GM12878 (cell line): ENCODE measurements at regions of chr18 and their contacts with region 1.

Region 1: DNA sequence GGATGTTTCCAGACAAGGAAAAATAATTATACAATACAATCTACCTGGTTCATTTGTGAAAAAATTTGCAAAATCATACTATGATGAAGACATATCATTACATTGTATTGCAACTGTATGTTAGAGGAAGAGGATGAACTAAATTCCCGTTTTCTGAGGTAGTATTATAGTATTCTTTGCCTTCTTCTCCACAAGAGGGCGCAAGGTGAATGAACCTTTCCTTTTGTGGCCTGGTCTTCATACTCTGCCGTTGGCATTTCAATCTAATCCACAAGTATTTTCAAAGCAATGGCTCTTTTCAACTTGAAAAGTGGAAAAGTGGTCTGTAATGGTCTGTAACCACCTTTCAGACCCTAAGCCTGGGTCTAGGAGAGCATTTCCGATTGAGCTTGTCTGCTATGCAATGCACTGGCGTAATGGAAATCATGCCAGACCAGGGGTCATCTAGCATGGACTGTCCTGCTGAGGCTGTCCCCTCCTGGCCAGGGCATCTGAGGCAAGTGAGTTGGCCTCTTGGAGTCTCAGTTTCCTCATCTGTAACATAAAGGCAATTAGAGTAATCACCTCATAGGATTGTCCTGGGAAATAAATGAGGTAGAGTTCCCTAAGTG is 30.8 kb upstream of the ZNF396 start:
- DNase-seq: no peak
- ATAC-seq: peak; percentile 78
- H3K4me3 ChIP-seq: no peak overlapping the region
- H3K27ac ChIP-seq: no peak overlapping the region
- H3K4me1 ChIP-seq: peaks cover 21% of the 10 kb centered on the region
- H3K27me3 ChIP-seq: no peaks in the 10 kb centered on the region
- CTCF ChIP-seq: peak; percentile 67 to 85 (median 76)
- EP300 ChIP-seq: no peak
- POLR2A ChIP-seq: no peak
- RAD21 ChIP-seq: peak; percentile 93

Region 2: DNA sequence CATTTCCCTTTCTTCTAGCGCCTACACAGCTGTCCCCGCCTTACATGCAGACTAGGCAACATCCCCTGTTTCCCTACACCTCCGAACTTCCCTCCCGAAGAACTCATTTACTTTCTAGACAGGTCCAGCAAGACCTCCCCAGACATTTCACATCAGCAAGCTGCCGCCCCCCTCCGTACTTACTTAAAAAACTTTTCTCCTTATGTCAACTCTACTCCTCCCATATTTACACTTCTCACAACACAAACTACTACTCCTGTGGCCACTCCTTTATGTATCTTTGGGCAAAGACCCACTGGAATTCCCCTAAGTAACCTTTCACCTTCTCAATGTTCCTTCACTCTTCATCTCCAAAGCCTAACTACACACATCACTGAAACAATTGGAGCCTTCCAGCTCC is 187.5 kb before region 1 on chr18:
- CTCF ChIA-PET with region 1: no interaction called
- POLR2A ChIA-PET with region 1: no interaction called
- RAD21 ChIA-PET with region 1: no interaction called
- SMC1A ChIA-PET with region 1: no interaction called
- in situ Hi-C with region 1: no loop called
- intact Hi-C with region 1: no loop called
- DNase-seq: no peak
- ATAC-seq: no peak
- H3K4me3 ChIP-seq: no peak overlapping the region
- H3K27ac ChIP-seq: no peak overlapping the region
- H3K4me1 ChIP-seq: no peaks in the 10 kb centered on the region
- H3K27me3 ChIP-seq: no peaks in the 10 kb centered on the region
- CTCF ChIP-seq: no peak
- EP300 ChIP-seq: no peak
- POLR2A ChIP-seq: no peak
- RAD21 ChIP-seq: no peak

Region 3: DNA sequence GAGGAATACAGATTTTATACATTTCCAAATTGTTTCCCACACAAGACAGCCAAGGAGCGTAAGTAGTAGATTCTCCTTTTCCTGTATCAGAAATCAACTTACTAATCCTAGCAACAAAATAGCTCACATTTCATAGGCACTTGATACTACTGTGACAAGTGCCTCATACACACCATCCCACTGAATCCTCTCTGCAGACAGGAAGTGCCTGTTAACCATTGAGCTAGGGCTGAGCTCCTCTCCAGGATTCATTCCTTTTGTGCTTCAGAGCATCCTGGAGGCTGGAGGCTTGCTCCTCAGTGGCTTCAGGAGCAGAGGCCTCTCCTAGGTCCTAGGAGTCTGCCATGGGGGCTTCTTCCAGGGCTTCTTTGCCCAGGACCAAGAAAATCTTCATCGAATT is 10.0 kb before region 1 on chr18:
- CTCF ChIA-PET with region 1: interaction called, 7 read pairs
- POLR2A ChIA-PET with region 1: no interaction called
- RAD21 ChIA-PET with region 1: interaction called, 6 read pairs
- SMC1A ChIA-PET with region 1: interaction called, 12 read pairs
- in situ Hi-C with region 1: no loop called
- intact Hi-C with region 1: no loop called
- DNase-seq: no peak
- ATAC-seq: no peak
- H3K4me3 ChIP-seq: no peak overlapping the region
- H3K27ac ChIP-seq: no peak overlapping the region
- H3K4me1 ChIP-seq: no peaks in the 10 kb centered on the region
- H3K27me3 ChIP-seq: no peaks in the 10 kb centered on the region
- CTCF ChIP-seq: no peak
- EP300 ChIP-seq: no peak
- POLR2A ChIP-seq: no peak
- RAD21 ChIP-seq: no peak

Region 4: GRCh38 chr18:35478520-35479435 is 70.8 kb after region 1 on chr18:
- CTCF ChIA-PET with region 1: interaction called, 11 read pairs
- POLR2A ChIA-PET with region 1: interaction called, 8 read pairs
- RAD21 ChIA-PET with region 1: interaction called, 10 read pairs
- SMC1A ChIA-PET with region 1: interaction called, 29 read pairs
- in situ Hi-C with region 1: no loop called
- intact Hi-C with region 1: no loop called
- DNase-seq: no peak
- ATAC-seq: peak; percentile 88
- H3K4me3 ChIP-seq: no peak overlapping the region
- H3K27ac ChIP-seq: no peak overlapping the region
- H3K4me1 ChIP-seq: no peaks in the 10 kb centered on the region
- H3K27me3 ChIP-seq: no peaks in the 10 kb centered on the region
- CTCF ChIP-seq: no peak
- EP300 ChIP-seq: no peak
- POLR2A ChIP-seq: no peak
- RAD21 ChIP-seq: no peak

Region 5: DNA sequence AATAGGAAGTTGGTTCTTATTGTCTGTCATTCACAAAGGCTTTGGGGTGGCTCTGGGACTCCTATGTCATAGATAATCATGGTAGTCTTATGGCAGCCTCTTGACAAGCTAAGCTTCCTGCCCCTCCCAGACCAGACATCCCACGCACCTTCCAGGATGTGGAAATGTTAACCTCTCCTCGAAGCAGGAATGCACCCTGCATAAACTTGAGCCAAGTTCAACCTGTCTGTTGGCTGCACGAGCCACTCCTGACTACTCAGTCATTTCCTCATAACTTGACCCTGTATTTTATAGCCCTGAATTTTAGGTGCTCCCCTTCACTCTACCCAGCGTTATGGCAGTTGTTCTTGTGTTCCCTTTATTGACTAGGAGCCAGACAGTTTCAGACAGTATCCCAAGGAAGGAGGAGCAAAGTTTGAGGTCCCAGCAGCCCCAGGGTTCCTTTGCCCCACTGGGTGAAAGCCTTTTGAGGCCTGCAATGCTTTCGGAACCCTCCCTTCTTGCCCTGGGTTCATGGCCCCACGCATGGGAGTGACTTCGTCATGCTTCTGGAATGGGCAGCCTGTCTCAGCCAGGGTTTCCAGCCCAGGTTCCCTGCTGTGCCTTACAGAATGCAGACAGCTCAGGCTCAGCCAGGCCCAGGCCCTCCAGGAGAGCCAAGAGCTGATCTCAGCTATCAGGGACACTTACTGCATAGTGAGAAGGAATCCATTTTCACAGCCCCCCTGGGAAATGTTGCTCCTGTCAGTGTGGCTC is 105.4 kb after region 1 on chr18:
- CTCF ChIA-PET with region 1: interaction called, 27 read pairs
- POLR2A ChIA-PET with region 1: no interaction called
- RAD21 ChIA-PET with region 1: interaction called, 24 read pairs
- SMC1A ChIA-PET with region 1: interaction called, 28 read pairs
- in situ Hi-C with region 1: no loop called
- intact Hi-C with region 1: loop called (anchors 1 kb)
- DNase-seq: no peak
- ATAC-seq: no peak
- H3K4me3 ChIP-seq: no peak overlapping the region
- H3K27ac ChIP-seq: no peak overlapping the region
- H3K4me1 ChIP-seq: peaks cover 8% of the 10 kb centered on the region
- H3K27me3 ChIP-seq: no peaks in the 10 kb centered on the region
- CTCF ChIP-seq: no peak
- EP300 ChIP-seq: no peak
- POLR2A ChIP-seq: no peak
- RAD21 ChIP-seq: no peak

Region 6: DNA sequence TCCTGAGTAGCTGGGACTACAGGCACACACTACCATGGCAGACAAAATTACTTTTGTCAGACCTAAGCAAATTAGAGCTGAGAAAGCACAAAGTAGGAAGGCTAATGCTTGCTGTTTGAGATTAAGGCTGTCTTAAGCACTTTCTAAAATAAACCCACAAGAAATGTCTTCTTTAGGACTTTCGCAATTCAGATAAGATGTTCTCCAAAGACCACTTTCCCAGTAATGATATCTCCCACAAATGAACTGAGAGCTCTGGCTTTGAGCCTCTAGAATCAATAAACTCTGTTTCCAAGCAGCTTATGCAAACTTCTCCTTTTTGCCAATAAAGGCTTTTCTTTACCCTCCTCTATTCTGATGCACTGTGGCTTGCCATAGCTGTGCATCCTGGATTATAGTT is 141.6 kb after region 1 on chr18:
- CTCF ChIA-PET with region 1: no interaction called
- POLR2A ChIA-PET with region 1: no interaction called
- RAD21 ChIA-PET with region 1: no interaction called
- SMC1A ChIA-PET with region 1: no interaction called
- in situ Hi-C with region 1: no loop called
- intact Hi-C with region 1: no loop called
- DNase-seq: no peak
- ATAC-seq: no peak
- H3K4me3 ChIP-seq: no peak overlapping the region
- H3K27ac ChIP-seq: no peak overlapping the region
- H3K4me1 ChIP-seq: no peaks in the 10 kb centered on the region
- H3K27me3 ChIP-seq: no peaks in the 10 kb centered on the region
- CTCF ChIP-seq: no peak
- EP300 ChIP-seq: no peak
- POLR2A ChIP-seq: no peak
- RAD21 ChIP-seq: no peak

Region 7: GRCh38 chr18:35688757-35689156 is 280.8 kb after region 1 on chr18:
- CTCF ChIA-PET with region 1: interaction called, 3 read pairs
- POLR2A ChIA-PET with region 1: no interaction called
- RAD21 ChIA-PET with region 1: interaction called, 3 read pairs
- SMC1A ChIA-PET with region 1: no interaction called
- in situ Hi-C with region 1: no loop called
- intact Hi-C with region 1: loop called (anchors 10 kb)
- DNase-seq: peak; percentile 35
- ATAC-seq: peak; percentile 94
- H3K4me3 ChIP-seq: no peak overlapping the region
- H3K27ac ChIP-seq: peak overlapping the region; percentile 7
- H3K4me1 ChIP-seq: peaks cover 4% of the 10 kb centered on the region
- H3K27me3 ChIP-seq: no peaks in the 10 kb centered on the region
- CTCF ChIP-seq: no peak
- EP300 ChIP-seq: no peak
- POLR2A ChIP-seq: no peak
- RAD21 ChIP-seq: no peak

Region 8: GRCh38 chr18:35756506-35757117 is 348.6 kb after region 1 on chr18:
- CTCF ChIA-PET with region 1: interaction called, 27 read pairs
- POLR2A ChIA-PET with region 1: no interaction called
- RAD21 ChIA-PET with region 1: interaction called, 6 read pairs
- SMC1A ChIA-PET with region 1: interaction called, 14 read pairs
- in situ Hi-C with region 1: no loop called
- intact Hi-C with region 1: loop called (anchors 2 kb)
- DNase-seq: no peak
- ATAC-seq: peak; percentile 93
- H3K4me3 ChIP-seq: no peak overlapping the region
- H3K27ac ChIP-seq: no peak overlapping the region
- H3K4me1 ChIP-seq: no peaks in the 10 kb centered on the region
- H3K27me3 ChIP-seq: peaks cover 0 to 2% of the 10 kb centered on the region in 2 experiments; a peak in 2 of 4 replicates
- CTCF ChIP-seq: peak; percentile 51 to 84 (median 53); a peak in 5 of 6 replicates
- EP300 ChIP-seq: no peak
- POLR2A ChIP-seq: no peak
- RAD21 ChIP-seq: peak; percentile 92

Region 9: GRCh38 chr18:35949903-35950627 is 542.1 kb after region 1 on chr18:
- CTCF ChIA-PET with region 1: interaction called, 6 read pairs
- POLR2A ChIA-PET with region 1: interaction called, 6 read pairs
- RAD21 ChIA-PET with region 1: no interaction called
- SMC1A ChIA-PET with region 1: interaction called, 4 read pairs
- in situ Hi-C with region 1: loop called (anchors 10 kb)
- intact Hi-C with region 1: loop called (anchors 5 kb)
- DNase-seq: no peak
- ATAC-seq: peak; percentile 85
- H3K4me3 ChIP-seq: no peak overlapping the region
- H3K27ac ChIP-seq: no peak overlapping the region
- H3K4me1 ChIP-seq: no peaks in the 10 kb centered on the region
- H3K27me3 ChIP-seq: no peaks in the 10 kb centered on the region
- CTCF ChIP-seq: peak; percentile 82 to 91 (median 85)
- EP300 ChIP-seq: no peak
- POLR2A ChIP-seq: no peak
- RAD21 ChIP-seq: peak; percentile 73